Activated CD4-positive, alpha-beta memory T cell treated with anti-CD3 and anti-CD28 coated beads for 36 hours (primary cell): ENCODE measurements at regions of chr3 and their contacts with region 1.

Region 1: DNA sequence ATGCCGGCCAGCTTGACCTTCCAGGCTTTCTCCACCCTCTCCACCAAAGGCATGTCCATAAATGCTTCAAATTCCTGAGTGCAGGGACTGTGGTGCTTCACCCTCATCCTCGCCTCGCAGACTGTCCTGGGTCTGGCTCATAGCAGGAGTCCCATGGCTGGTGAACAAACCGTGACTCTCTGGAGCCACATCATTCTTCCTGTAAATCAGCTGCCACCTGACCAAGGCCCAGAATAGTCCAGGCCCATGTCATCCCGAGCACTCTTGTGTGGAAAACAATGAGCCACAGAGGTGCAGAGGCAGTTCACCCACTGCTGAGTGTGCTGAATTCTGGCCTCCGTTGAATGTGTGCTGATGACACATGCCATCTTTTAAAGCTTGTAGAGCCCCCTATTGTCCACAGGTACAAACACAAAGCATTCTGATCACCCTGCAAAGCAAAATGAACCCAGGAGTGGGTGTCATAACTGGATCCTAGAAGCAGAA is 68.6 kb downstream of the ABHD5 start:
- DNase-seq: peak; percentile 51
- H3K4me3 Mint-ChIP-seq: no peak overlapping the region
- H3K27ac Mint-ChIP-seq: no peak overlapping the region
- H3K4me1 Mint-ChIP-seq: peaks cover 40% of the 10 kb centered on the region
- H3K27me3 Mint-ChIP-seq: no peaks in the 10 kb centered on the region

Region 2: GRCh38 chr3:43105596-43106292 is 653.6 kb before region 1 on chr3 and contains the start of gene POMGNT2:
- CTCF ChIA-PET with region 1: no interaction called
- POLR2A ChIA-PET with region 1: no interaction called
- intact Hi-C with region 1: no loop called
- DNase-seq: peak; percentile 93
- H3K4me3 Mint-ChIP-seq: peak within 1 kb of the TSS; percentile 73
- H3K27ac Mint-ChIP-seq: no peak within 1 kb of the TSS
- H3K4me1 Mint-ChIP-seq: peaks cover 11% of the 10 kb centered on the region
- H3K27me3 Mint-ChIP-seq: no peaks in the 10 kb centered on the region
- total RNA-seq, gene POMGNT2: 7.3 to 7.8 TPM

Region 3: GRCh38 chr3:43540624-43541023 is 218.7 kb before region 1 on chr3:
- CTCF ChIA-PET with region 1: no interaction called
- POLR2A ChIA-PET with region 1: no interaction called
- intact Hi-C with region 1: loop called (anchors 5 kb)
- DNase-seq: no peak
- H3K4me3 Mint-ChIP-seq: no peak overlapping the region
- H3K27ac Mint-ChIP-seq: no peak overlapping the region
- H3K4me1 Mint-ChIP-seq: no peaks in the 10 kb centered on the region
- H3K27me3 Mint-ChIP-seq: no peaks in the 10 kb centered on the region

Region 4: DNA sequence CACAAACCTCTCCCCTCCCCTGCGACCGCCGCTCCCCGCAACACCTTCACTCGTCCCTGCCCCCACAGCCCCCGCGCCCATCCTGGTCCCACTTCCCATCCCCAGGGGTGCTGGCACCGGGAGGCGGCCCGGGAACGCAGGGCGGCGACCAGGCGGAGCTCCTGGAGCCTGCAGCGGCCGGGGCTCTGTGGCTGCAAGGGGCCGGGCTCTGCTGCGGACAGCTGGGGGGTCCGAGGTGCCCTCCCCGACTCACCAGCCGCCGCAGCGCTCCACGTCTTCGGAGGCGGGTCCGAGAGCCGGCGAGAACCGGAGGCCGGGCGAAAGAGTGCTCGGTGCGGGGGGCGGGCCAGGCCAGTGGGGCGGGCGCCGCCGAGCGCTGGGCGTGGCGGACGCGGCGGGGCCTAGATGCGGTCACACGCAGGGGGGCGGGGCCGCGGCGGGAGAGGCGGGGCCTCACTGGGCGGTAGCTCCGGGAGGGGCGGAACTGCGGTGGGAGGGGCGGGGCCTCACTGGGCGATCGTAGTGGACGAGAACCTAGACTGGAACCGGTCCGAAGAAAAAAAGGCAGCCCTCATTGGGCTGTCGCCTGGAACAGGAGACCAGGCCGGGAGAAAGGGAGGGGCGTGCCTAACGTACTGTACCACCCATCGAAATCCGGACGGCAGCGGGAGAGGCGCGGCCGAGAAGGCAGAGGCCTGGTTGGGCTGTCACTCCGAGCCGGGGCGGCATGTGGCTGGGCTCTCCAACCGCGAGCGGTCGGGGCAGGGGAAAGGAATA is 137.5 kb before region 1 on chr3 and contains the start of gene ANO10:
- CTCF ChIA-PET with region 1: no interaction called
- POLR2A ChIA-PET with region 1: no interaction called
- intact Hi-C with region 1: loop called (anchors 5 kb)
- DNase-seq: peak; percentile 97
- H3K4me3 Mint-ChIP-seq: peak within 1 kb of the TSS; percentile 82
- H3K27ac Mint-ChIP-seq: peak within 1 kb of the TSS; percentile 70
- H3K4me1 Mint-ChIP-seq: peaks cover 10% of the 10 kb centered on the region
- H3K27me3 Mint-ChIP-seq: no peaks in the 10 kb centered on the region
- total RNA-seq, gene ANO10: 8.4 to 8.5 TPM

Region 5: DNA sequence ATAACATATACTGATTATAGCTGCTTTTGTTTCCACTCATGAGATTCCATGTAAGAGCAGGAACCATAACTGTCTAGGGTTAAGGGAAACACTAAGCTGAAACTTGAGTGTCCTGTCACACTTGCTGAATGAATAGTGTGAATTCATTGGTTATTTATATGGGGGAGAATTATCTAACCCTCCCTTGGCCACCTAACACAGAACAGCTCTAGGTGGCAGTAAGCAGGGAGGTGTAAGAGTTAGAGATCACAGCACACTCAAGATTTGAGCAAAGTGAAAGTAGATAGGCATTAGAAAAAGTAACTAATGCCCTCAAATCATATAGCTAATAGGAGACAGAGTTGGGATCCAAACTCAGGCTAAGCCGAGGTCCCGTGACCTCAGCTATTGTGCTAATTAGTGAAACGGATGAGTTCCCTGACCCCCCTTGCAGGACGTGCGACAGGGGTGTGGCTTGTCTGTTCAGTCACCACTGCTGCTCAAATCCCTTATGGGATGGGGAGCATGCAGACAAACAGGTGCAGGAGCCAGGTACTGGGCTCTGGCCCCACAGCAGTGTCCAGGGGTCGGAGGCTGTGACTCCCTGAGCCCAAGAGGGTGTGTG is 109.9 kb before region 1 on chr3:
- CTCF ChIA-PET with region 1: no interaction called
- POLR2A ChIA-PET with region 1: no interaction called
- intact Hi-C with region 1: no loop called
- DNase-seq: no peak
- H3K4me3 Mint-ChIP-seq: no peak overlapping the region
- H3K27ac Mint-ChIP-seq: no peak overlapping the region
- H3K4me1 Mint-ChIP-seq: no peaks in the 10 kb centered on the region
- H3K27me3 Mint-ChIP-seq: peaks cover 11% of the 10 kb centered on the region

Region 6: DNA sequence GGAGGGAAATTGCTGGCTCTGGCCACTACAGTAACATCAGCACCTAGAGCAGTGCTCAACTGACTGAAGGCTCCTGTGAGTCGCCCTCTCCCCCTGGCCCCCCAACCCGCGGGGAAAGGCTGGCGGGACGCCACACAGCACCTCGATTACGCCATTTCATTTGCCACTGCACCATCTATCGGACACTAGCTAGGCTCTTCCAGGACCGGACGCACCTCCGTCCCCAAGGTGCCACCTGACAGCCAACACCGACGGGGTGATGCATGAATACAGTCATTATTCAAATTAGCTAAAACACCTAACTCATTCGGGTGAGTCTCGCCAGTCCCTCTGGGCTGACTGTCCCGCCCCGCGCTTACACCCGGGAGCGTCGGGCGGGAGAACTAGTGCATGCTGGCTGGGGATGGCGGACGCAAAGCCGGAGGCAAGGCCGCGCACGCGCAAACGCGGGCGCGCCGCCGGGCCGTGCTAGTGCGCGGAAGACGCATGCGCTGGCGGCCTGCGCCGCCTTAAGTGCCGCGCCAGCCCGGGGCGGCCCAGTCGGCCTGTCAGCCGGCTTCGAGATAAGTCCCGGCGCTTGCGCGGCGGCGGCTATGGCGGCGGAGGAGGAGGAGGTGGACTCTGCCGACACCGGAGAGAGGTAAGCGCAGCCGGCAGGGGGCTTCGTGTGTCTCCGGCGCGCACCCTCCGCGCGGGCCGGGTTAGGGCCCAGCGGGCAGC is 68.8 kb before region 1 on chr3 and contains the start of gene ABHD5:
- CTCF ChIA-PET with region 1: no interaction called
- POLR2A ChIA-PET with region 1: no interaction called
- intact Hi-C with region 1: loop called (anchors 2 kb)
- DNase-seq: peak; percentile 92
- H3K4me3 Mint-ChIP-seq: peak within 1 kb of the TSS; percentile 84
- H3K27ac Mint-ChIP-seq: peak within 1 kb of the TSS; percentile 85
- H3K4me1 Mint-ChIP-seq: peaks cover 37% of the 10 kb centered on the region
- H3K27me3 Mint-ChIP-seq: no peaks in the 10 kb centered on the region
- total RNA-seq, gene ABHD5: 10.0 to 11.4 TPM

Region 7: GRCh38 chr3:43769471-43770425 is 10.4 kb after region 1 on chr3:
- CTCF ChIA-PET with region 1: interaction called, 10 read pairs
- POLR2A ChIA-PET with region 1: no interaction called
- intact Hi-C with region 1: no loop called
- DNase-seq: peak; percentile 86
- H3K4me3 Mint-ChIP-seq: no peak overlapping the region
- H3K27ac Mint-ChIP-seq: no peak overlapping the region
- H3K4me1 Mint-ChIP-seq: peaks cover 28% of the 10 kb centered on the region
- H3K27me3 Mint-ChIP-seq: no peaks in the 10 kb centered on the region

Region 8: GRCh38 chr3:43894176-43895049 is 135.1 kb after region 1 on chr3:
- CTCF ChIA-PET with region 1: no interaction called
- POLR2A ChIA-PET with region 1: no interaction called
- intact Hi-C with region 1: no loop called
- DNase-seq: peak; percentile 57
- H3K4me3 Mint-ChIP-seq: peak overlapping the region; percentile 64
- H3K27ac Mint-ChIP-seq: no peak overlapping the region
- H3K4me1 Mint-ChIP-seq: peaks cover 11% of the 10 kb centered on the region
- H3K27me3 Mint-ChIP-seq: peaks cover 42% of the 10 kb centered on the region